AG04449 (cell line): ENCODE measurements at regions of chr6 and their contacts with region 1.

Region 1: DNA sequence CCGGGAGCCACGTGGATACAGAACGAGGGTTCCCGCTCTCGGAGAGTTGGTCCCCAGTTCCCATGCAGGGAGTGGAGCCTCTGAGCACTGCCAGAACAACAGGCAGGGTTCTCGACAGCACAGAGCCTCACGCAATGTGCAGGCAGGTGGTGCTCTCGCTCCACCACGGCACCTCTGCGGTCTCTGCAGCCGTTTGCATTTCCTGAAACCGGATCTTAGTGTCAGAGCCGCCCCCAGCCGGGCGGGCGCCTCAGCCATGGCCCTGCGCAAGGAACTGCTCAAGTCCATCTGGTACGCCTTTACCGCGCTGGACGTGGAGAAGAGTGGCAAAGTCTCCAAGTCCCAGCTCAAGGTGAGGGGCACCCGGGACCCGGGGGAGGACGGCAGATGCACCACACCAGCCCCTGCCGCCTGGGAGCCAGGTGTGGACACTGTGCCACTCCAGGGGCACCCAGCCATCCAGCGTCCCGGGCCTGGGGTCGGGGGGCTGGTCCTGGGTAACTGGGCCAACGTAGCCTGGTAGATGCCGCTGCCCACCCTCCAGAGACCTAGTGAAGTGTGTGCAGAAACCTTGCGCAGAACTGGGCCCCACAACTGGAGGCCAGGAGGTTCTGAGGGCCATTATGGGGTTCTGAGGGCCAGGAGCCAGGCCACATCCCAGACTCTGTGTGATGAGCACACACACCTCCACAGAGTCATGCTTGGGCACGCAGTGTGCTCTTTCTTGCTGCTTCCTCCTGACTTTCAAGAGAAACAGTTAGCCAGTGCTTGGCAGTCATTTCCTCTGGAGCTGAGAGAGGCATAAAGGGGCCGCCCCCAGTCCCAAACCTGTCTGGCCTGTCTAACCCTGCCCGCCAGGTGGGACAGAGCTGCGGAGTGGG is at the start of gene DEF6:
- DNase-seq: peak; percentile 17
- H3K4me3 ChIP-seq: peak within 1 kb of the TSS; percentile 55
- CTCF ChIP-seq: peak; percentile 80

Region 2: GRCh38 chr6:35287671-35288396 is 10.0 kb before region 1 on chr6:
- CTCF ChIA-PET with region 1: interaction called, 59 read pairs
- POLR2A ChIA-PET with region 1: no interaction called
- DNase-seq: no peak
- H3K4me3 ChIP-seq: no peak overlapping the region
- CTCF ChIP-seq: no peak

Region 3: DNA sequence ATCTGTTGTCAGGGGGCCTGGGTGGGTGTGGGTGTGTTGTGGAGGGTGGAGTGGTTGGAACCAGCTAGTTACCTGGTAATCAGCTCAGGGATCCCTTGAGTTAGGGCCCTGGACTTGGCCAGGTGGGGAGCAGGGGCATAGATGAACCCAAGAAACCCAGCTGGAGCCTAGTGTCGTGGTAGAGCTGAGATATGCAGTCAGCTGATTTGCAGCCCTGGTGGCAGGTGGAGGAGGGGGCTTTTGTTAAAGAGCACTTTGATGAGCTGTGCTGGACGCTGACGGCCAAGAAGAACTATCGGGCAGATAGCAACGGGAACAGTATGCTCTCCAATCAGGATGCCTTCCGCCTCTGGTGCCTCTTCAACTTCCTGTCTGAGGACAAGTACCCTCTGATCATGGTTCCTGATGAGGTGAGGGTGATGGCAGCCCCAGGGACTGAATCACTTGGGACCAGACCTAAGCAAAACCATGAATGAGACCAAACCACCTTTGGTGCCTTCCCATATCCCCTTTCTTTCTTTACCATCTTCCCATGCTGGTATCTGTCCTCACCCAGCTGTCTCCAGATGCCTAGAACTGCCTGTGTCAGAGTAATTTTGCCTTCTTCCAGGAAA is 12.5 kb after region 1 on chr6:
- CTCF ChIA-PET with region 1: interaction called, 17 read pairs
- POLR2A ChIA-PET with region 1: no interaction called
- DNase-seq: no peak
- H3K4me3 ChIP-seq: no peak overlapping the region
- CTCF ChIP-seq: no peak

Region 4: DNA sequence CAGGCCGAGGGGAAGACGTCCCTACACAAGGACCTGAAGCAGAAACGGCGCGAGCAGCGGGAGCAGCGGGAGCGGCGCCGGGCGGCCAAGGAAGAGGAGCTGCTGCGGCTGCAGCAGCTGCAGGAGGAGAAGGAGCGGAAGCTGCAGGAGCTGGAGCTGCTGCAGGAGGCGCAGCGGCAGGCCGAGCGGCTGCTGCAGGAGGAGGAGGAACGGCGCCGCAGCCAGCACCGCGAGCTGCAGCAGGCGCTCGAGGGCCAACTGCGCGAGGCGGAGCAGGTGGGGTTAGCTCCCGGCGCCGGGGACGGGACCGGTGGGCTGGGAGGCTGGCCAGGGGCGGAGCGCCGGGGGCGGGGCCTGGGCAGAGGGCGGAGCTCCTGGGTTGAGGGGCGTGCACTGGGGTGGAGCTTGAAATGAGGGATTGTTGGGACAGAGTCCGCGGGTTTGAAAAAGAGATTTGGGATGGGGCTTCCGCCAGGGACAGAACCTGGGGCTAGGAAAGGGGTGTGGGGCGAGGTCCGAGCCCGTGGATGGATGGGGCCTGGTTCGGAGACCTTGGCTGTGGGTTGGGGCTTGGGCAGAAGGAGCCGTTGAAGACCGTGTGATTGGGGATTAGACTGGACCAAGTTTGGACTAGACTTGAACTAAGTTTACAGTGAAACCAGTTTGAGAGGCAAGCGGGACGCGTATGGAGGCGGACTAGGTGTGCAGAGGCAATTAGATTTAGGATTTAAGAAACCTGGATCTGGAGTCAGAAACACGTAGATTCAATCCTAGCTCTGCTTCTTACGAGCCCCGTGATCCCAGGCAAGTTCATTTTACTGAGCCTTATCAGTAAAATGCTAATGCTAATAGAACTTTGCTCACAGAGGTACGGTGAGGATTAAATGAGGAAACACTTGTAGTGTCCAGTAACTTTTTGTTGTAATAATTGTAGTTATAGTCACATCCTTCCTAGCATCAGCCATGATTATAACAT is 20.6 kb after region 1 on chr6:
- CTCF ChIA-PET with region 1: interaction called, 21 read pairs
- POLR2A ChIA-PET with region 1: no interaction called
- DNase-seq: no peak
- H3K4me3 ChIP-seq: peak overlapping the region; percentile 63
- CTCF ChIP-seq: peak; percentile 23

Region 5: DNA sequence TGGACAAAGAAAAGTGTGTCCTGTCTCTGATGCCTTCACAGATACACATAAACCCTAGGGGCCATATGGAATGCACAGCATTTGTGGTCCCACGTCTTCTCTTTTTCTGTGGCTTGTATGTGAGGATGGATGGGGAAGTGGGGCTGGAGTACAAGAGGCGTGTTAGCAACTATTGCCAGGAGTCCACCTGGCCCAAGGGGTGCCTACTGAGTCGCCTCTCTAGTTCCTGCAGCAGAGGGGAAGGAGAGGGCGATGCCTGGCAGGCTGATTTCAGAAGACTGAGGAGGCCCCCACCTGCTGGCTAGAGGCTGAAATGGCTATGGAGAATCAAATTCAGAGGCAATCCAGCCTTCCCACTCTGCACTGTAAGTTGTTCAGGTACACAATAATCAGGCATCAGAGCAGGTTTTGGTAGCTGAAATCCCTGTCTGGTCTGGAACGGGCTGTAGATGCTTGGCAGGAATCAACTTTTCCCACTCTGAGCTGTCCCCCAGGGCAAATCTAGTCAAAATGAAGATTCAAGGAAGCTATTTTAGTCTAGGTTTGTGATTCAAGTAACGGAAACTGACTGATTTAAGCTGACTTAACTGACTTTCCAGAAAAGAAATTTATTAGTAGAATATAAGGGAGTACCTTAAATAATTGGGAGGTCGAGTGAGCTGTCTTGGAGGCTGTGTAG is 29.6 kb after region 1 on chr6:
- CTCF ChIA-PET with region 1: interaction called, 93 read pairs
- POLR2A ChIA-PET with region 1: no interaction called
- DNase-seq: no peak
- H3K4me3 ChIP-seq: no peak overlapping the region
- CTCF ChIP-seq: peak; percentile 81

Region 6: GRCh38 chr6:35359751-35360348 is 62.0 kb after region 1 on chr6:
- CTCF ChIA-PET with region 1: no interaction called
- POLR2A ChIA-PET with region 1: no interaction called
- DNase-seq: peak; percentile 73
- H3K4me3 ChIP-seq: no peak overlapping the region
- CTCF ChIP-seq: no peak